Activated T-helper 2 cell treated with anti-CD3 and anti-CD28 coated beads, Interferon-gamma antibody, Interleukin-2, Interleukin-4, amounts not matched to agents 10 μg/mL and 5 μg/mL and 100 μg/mL, durations not matched to agents 14 hours and 24 hours and 36 hours (primary cell): ENCODE measurements at regions of chr14 and their contacts with region 1.

Region 1: GRCh38 chr14:52351233-52352060 is 37.3 kb downstream of the PTGER2 start:
- DNase-seq: no peak
- H3K4me3 Mint-ChIP-seq: peak overlapping the region; percentile 73
- H3K27ac Mint-ChIP-seq: peak overlapping the region; percentile 99
- H3K4me1 Mint-ChIP-seq: peaks cover 77% of the 10 kb centered on the region
- H3K27me3 Mint-ChIP-seq: no peaks in the 10 kb centered on the region

Region 2: GRCh38 chr14:51873221-51873893 is 478.1 kb before region 1 on chr14:
- intact Hi-C with region 1: loop called (anchors 5 kb)
- DNase-seq: no peak
- H3K4me3 Mint-ChIP-seq: peak overlapping the region; percentile 22
- H3K27ac Mint-ChIP-seq: peak overlapping the region; percentile 85
- H3K4me1 Mint-ChIP-seq: peaks cover 54% of the 10 kb centered on the region
- H3K27me3 Mint-ChIP-seq: no peaks in the 10 kb centered on the region

Region 3: GRCh38 chr14:52325126-52325525 is 26.3 kb before region 1 on chr14:
- intact Hi-C with region 1: loop called (anchors 1 kb)
- DNase-seq: no peak
- H3K4me3 Mint-ChIP-seq: peak overlapping the region; percentile 37
- H3K27ac Mint-ChIP-seq: peak overlapping the region; percentile 73
- H3K4me1 Mint-ChIP-seq: peaks cover 81% of the 10 kb centered on the region
- H3K27me3 Mint-ChIP-seq: no peaks in the 10 kb centered on the region

Region 4: GRCh38 chr14:52380294-52380693 is 28.8 kb after region 1 on chr14:
- intact Hi-C with region 1: no loop called
- DNase-seq: no peak
- H3K4me3 Mint-ChIP-seq: no peak overlapping the region
- H3K27ac Mint-ChIP-seq: no peak overlapping the region
- H3K4me1 Mint-ChIP-seq: peaks cover 26% of the 10 kb centered on the region
- H3K27me3 Mint-ChIP-seq: peaks cover 1% of the 10 kb centered on the region

Region 5: DNA sequence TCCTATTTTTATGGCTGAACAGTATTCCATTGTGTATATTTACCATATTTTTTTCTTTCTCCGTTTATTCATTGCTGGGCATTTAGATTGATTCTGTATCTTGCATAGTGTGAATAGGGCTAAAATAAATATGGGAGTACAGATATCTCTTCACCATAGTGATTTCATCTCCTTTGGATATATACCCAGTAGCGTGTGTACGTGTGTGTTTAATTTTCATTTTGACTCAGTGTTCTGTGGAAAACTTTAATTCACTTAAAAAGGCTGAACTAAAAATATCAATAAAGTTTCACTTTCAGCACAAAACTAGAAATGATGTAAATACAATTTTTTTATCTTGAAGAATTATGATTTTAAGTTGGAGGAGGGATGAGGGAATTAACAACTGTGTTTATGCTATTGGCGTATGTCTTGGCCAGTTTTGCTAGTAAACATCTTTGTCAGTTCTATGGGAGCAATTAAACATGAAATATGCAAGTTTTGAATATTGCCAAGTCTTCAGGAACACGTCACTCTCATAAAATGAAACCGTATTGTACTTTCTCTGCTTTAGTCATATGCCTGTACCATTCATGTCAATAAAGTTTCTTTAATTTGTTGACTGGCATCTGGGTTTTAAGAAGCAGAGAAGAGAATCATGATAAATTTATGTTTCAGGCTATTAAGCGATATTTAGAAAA is 62.4 kb after region 1 on chr14:
- intact Hi-C with region 1: loop called (anchors 1 kb)
- DNase-seq: no peak
- H3K4me3 Mint-ChIP-seq: peak overlapping the region; percentile 67
- H3K27ac Mint-ChIP-seq: peak overlapping the region; percentile 97
- H3K4me1 Mint-ChIP-seq: peaks cover 66% of the 10 kb centered on the region
- H3K27me3 Mint-ChIP-seq: no peaks in the 10 kb centered on the region

Region 6: DNA sequence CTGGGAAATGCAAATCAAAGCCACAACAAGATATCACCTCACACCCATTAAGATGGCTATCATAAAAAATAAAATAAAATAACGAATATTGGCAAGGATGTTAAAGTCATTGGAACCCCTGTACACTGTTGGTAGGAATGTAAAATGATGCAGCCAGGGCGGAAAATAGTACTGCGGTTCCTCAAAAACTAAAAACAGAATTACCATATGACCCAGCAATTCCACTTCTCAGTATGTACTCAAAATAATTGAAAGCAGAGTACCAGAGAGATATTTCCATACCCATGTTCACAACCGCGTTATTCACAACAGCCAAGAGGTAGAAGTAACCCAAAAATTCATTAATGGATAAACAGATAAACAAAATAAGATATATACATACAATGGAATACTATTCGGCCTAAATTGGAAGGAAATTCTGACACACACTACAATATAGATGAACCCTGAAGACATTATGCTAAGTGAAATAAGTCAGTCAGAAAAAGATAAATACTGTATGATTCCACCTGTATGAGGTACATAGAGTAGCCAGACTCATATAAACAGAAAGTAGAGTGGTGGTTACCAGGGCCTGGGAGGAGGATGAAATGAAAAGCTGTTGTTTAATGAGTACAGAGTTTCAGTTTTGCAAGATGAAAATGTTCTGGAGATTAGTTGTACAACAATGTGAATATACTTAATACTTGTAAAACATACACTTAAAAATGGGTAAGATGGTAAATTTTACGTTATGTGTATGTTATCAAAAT is 116.2 kb after region 1 on chr14:
- intact Hi-C with region 1: loop called (anchors 1 kb)
- DNase-seq: no peak
- H3K4me3 Mint-ChIP-seq: no peak overlapping the region
- H3K27ac Mint-ChIP-seq: peak overlapping the region; percentile 61
- H3K4me1 Mint-ChIP-seq: peaks cover 33% of the 10 kb centered on the region
- H3K27me3 Mint-ChIP-seq: no peaks in the 10 kb centered on the region